ENCODE measurements at regions of chr5 and their contacts with region 1.

Region 1: GRCh38 chr5:131589510-131590348 is 45.3 kb downstream of the RAPGEF6 start:
- DNase-seq: peak; percentile 73
- H3K4me3 ChIP-seq: no peak overlapping the region
- H3K27ac ChIP-seq: no peak overlapping the region
- H3K4me1 ChIP-seq: no peaks in the 10 kb centered on the region
- H3K27me3 ChIP-seq: no peaks in the 10 kb centered on the region
- CTCF ChIP-seq: peak; percentile 65 to 76
- POLR2A ChIP-seq: no peak

Region 2: GRCh38 chr5:131423056-131423455 is 166.7 kb before region 1 on chr5:
- CTCF ChIA-PET with region 1: interaction called, 49 read pairs
- POLR2A ChIA-PET with region 1: no interaction called
- dilution Hi-C with region 1: no loop called
- intact Hi-C with region 1: loop called (anchors 1 kb)
- DNase-seq: peak; percentile 46
- H3K4me3 ChIP-seq: no peak overlapping the region
- H3K27ac ChIP-seq: no peak overlapping the region
- H3K4me1 ChIP-seq: no peaks in the 10 kb centered on the region
- H3K27me3 ChIP-seq: no peaks in the 10 kb centered on the region
- CTCF ChIP-seq: peak; percentile 47 to 56
- POLR2A ChIP-seq: no peak

Region 3: DNA sequence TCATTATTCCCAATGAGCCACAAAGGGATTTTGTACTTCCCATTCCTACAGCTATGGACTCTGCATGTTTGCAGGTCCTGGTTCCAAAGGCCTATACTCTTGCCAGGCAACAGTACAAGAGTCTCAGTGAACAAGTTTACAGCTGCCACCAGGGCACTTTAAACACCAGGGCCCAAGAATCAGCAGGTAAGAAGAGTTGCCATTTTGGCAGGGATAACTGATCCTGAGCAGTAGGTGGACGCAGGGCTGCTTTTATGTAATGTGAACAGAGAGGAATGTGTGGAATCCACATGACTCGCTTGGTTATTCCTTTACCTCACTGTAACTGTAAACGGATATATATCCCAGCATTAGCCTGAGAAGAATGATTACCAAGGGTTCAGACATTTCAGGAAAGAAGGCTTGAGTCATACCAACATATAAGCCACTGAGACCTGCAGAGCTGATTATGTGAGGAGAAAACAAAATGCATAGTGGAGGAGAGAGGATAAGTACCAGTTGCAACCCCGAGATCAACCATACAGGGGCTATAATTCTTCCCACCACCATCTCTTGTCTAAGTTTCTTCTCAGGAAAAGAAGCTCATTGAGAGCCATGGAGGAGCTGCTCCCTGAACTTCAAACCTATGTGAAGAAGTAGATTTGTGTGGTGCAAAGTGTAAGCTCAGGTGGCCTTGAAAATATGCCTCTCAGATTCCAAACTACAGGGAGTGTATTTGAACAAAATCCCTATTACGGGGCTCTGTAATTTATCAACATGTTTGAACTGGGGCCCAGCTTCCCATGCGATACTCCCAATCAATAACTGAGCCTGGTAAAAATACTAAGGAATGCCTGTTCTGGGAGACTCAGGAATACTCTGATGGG is 20.7 kb after region 1 on chr5:
- CTCF ChIA-PET with region 1: interaction called, 14 read pairs
- POLR2A ChIA-PET with region 1: no interaction called
- dilution Hi-C with region 1: no loop called
- intact Hi-C with region 1: no loop called
- DNase-seq: peak; percentile 87
- H3K4me3 ChIP-seq: no peak overlapping the region
- H3K27ac ChIP-seq: peak overlapping the region; percentile 68
- H3K4me1 ChIP-seq: peaks cover 13% of the 10 kb centered on the region
- H3K27me3 ChIP-seq: no peaks in the 10 kb centered on the region
- CTCF ChIP-seq: no peak
- POLR2A ChIP-seq: no peak

Region 4: DNA sequence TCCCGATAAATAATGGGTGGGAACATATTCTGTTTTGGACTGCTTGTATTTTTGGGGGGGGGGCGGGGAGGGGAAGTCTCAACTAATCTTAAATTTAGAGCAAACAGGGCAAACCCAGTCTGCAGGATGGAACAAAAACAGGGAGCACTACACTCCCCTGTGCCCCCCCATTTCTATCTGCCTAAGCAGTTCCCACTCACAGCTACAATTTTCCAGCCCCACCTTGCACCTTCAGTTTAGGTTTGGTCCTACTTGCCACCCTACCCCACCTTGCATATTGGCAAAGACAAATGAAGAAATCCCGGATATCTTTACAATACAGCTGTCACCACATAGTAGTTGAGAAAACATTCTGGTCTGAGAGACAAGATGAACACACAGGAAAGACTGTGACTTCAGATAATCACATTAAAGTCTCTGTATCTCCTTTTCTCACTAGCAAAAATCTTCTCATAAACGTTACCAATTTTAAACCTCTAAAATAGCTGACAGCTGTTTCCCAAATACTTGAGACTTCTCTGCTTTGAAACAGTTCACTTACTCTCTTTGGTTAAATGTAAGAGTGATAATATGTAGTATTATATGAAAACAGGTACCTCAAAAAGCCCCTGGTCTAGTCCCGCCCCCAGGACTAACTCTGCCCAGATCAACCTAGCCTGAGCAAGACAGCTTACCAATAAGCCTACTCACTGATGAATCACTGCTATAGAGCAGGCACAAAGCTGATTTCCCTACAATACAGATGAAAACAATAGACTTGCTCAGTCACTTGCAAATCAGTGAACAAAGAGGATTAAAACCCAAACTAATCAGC is 50.5 kb after region 1 on chr5:
- CTCF ChIA-PET with region 1: interaction called, 17 read pairs
- POLR2A ChIA-PET with region 1: no interaction called
- dilution Hi-C with region 1: no loop called
- intact Hi-C with region 1: loop called (anchors 1 kb)
- DNase-seq: peak; percentile 29
- H3K4me3 ChIP-seq: no peak overlapping the region
- H3K27ac ChIP-seq: no peak overlapping the region
- H3K4me1 ChIP-seq: peaks cover 11% of the 10 kb centered on the region
- H3K27me3 ChIP-seq: no peaks in the 10 kb centered on the region
- CTCF ChIP-seq: no peak
- POLR2A ChIP-seq: no peak

Region 5: GRCh38 chr5:131810510-131811249 is 221.0 kb after region 1 on chr5:
- CTCF ChIA-PET with region 1: interaction called, 12 read pairs
- POLR2A ChIA-PET with region 1: no interaction called
- dilution Hi-C with region 1: no loop called
- intact Hi-C with region 1: loop called (anchors 5 kb)
- DNase-seq: peak; percentile 27
- H3K4me3 ChIP-seq: no peak overlapping the region
- H3K27ac ChIP-seq: no peak overlapping the region
- H3K4me1 ChIP-seq: peaks cover 21% of the 10 kb centered on the region
- H3K27me3 ChIP-seq: no peaks in the 10 kb centered on the region
- CTCF ChIP-seq: peak; percentile 4 to 8
- POLR2A ChIP-seq: no peak

Region 6: DNA sequence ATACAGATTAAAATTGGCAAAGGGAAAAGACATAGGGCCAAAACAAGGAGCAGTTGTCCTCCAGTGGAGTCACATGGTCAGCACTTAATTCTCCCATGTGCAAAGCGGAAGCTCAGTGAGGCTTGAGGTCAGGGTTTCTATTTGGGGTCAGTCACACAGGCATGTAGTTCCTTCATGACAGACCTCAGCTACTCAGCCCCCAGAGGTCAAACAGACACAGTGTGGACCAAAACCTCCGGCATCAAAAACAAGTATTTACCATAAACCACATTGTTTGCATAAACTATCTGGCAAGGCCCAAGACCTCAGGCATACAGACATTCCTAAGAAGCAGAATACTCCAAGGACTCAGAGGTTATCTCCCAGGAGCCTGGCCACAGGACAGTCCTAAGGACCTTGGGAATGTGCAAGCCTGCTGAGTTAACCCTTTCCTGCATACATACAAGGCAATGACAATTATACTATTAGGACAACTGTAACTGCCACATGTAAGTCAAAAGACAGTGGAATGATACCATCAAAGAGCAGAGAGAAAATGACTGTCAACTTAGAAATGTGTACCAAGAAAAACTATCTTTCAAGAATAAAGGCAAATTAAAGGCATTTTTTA is 235.8 kb after region 1 on chr5:
- CTCF ChIA-PET with region 1: no interaction called
- POLR2A ChIA-PET with region 1: no interaction called
- dilution Hi-C with region 1: no loop called
- intact Hi-C with region 1: no loop called
- DNase-seq: no peak
- H3K4me3 ChIP-seq: no peak overlapping the region
- H3K27ac ChIP-seq: no peak overlapping the region
- H3K4me1 ChIP-seq: no peaks in the 10 kb centered on the region
- H3K27me3 ChIP-seq: peaks cover 1 to 2% of the 10 kb centered on the region in 2 experiments
- CTCF ChIP-seq: no peak
- POLR2A ChIP-seq: no peak

Region 7: DNA sequence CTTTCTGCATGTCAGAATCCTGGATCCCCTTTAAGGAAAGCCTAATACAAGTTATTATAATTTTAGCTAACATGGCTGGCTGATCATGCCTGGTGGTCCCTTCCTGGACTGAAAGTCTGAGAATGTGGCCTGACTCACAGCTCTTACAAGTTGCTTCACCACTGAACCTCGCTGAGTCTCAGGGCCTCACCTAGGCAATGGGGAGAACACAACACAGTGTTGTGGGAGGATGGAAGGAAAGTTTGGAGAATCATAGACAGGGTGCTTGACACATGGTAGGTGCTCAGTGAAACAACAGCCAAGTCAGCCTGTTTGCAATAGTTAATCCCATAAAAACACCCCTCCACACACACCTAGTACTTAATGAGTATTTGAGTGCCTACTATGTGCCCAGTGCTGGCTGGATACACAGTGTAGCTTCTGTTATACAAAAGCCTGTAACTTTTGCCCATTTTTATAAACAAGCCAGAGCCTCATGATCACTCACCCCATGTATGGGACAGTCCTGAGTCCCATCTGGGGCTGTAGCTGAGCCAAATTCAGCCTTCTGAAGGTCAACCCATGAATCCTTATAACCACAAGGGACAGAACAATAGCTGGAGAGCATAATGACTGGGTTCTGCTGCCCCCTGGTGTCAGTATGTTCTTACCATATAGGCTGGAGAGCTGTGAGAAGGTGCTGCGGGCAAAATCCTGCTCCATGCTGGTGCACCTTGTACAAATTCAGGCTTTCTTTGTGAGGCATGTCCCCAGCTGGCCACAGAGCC is 417.9 kb after region 1 on chr5:
- CTCF ChIA-PET with region 1: interaction called, 323 read pairs
- POLR2A ChIA-PET with region 1: no interaction called
- dilution Hi-C with region 1: loop called (anchors 25 kb)
- intact Hi-C with region 1: loop called (anchors 1 kb)
- DNase-seq: peak; percentile 78
- H3K4me3 ChIP-seq: no peak overlapping the region
- H3K27ac ChIP-seq: no peak overlapping the region
- H3K4me1 ChIP-seq: no peaks in the 10 kb centered on the region
- H3K27me3 ChIP-seq: peaks cover 17 to 21% of the 10 kb centered on the region in 2 experiments
- CTCF ChIP-seq: peak; percentile 66 to 74
- POLR2A ChIP-seq: no peak